ENCODE measurements at regions of chr9 and their contacts with region 1.

Region 1: GRCh38 chr9:92790542-92791527 is 26.2 kb upstream of the BICD2 start:
- DNase-seq: peak; percentile 84
- ATAC-seq: peak; percentile 96
- H3K4me3 Mint-ChIP-seq: peak overlapping the region; percentile 7
- H3K27ac Mint-ChIP-seq: no peak overlapping the region
- H3K4me1 Mint-ChIP-seq: peaks cover 12% of the 10 kb centered on the region
- H3K27me3 Mint-ChIP-seq: peaks cover 20% of the 10 kb centered on the region

Region 2: DNA sequence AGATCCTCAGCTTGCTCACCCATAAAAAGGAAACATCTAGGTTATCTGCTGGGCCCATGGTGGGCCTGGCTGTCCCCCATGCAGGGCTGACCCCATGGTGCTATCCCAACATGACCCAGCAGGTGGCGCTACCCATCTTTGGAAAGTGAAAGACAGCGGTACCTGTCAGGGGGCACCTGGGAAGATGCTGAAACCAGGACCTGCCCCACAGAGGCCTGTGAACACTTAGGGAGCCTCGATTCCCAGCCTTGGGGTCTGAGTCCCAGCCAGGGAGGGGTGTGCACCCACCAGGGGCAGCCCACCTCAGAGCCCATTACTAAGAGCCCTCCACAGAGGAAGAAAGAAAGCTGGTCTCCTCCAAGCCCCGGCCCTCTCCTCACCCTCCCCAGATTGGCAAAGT is 74.3 kb before region 1 on chr9:
- CTCF ChIA-PET with region 1: interaction called, 30 read pairs
- DNase-seq: peak; percentile 84
- ATAC-seq: peak; percentile 71
- H3K4me3 Mint-ChIP-seq: no peak overlapping the region
- H3K27ac Mint-ChIP-seq: peak overlapping the region; percentile 59
- H3K4me1 Mint-ChIP-seq: peaks cover 26% of the 10 kb centered on the region
- H3K27me3 Mint-ChIP-seq: no peaks in the 10 kb centered on the region

Region 3: GRCh38 chr9:92764988-92765936 is 25.6 kb before region 1 on chr9:
- CTCF ChIA-PET with region 1: interaction called, 14 read pairs
- DNase-seq: peak; percentile 99
- ATAC-seq: peak; percentile 93
- H3K4me3 Mint-ChIP-seq: peak overlapping the region; percentile 83
- H3K27ac Mint-ChIP-seq: peak overlapping the region; percentile 95
- H3K4me1 Mint-ChIP-seq: peaks cover 49% of the 10 kb centered on the region
- H3K27me3 Mint-ChIP-seq: no peaks in the 10 kb centered on the region

Region 4: GRCh38 chr9:92808726-92809451 is 18.1 kb after region 1 on chr9:
- CTCF ChIA-PET with region 1: interaction called, 11 read pairs
- DNase-seq: peak; percentile 74
- ATAC-seq: peak; percentile 74
- H3K4me3 Mint-ChIP-seq: peak overlapping the region; percentile 57
- H3K27ac Mint-ChIP-seq: no peak overlapping the region
- H3K4me1 Mint-ChIP-seq: peaks cover 13% of the 10 kb centered on the region
- H3K27me3 Mint-ChIP-seq: peaks cover 60% of the 10 kb centered on the region